GM12878 (cell line): ENCODE measurements at regions of chr13 and their contacts with region 1.

Region 1: GRCh38 chr13:27953676-27954405 is 15.3 kb downstream of the CDX2 start:
- DNase-seq: no peak
- ATAC-seq: peak; percentile 99
- H3K4me3 ChIP-seq: peak overlapping the region; percentile 43; the same call in 1 of the 2 replicates
- H3K27ac ChIP-seq: no peak overlapping the region
- H3K4me1 ChIP-seq: peaks cover 9% of the 10 kb centered on the region
- H3K27me3 ChIP-seq: peaks cover 9 to 10% of the 10 kb centered on the region in 2 experiments
- CTCF ChIP-seq: peak; percentile 81 to 88 (median 85)
- EP300 ChIP-seq: no peak
- POLR2A ChIP-seq: no peak
- RAD21 ChIP-seq: peak; percentile 82

Region 2: GRCh38 chr13:27489456-27489855 is 464.4 kb before region 1 on chr13:
- CTCF ChIA-PET with region 1: no interaction called
- POLR2A ChIA-PET with region 1: no interaction called
- RAD21 ChIA-PET with region 1: no interaction called
- SMC1A ChIA-PET with region 1: no interaction called
- in situ Hi-C with region 1: no loop called
- intact Hi-C with region 1: no loop called
- DNase-seq: no peak
- ATAC-seq: no peak
- H3K4me3 ChIP-seq: no peak overlapping the region
- H3K27ac ChIP-seq: no peak overlapping the region
- H3K4me1 ChIP-seq: no peaks in the 10 kb centered on the region
- H3K27me3 ChIP-seq: no peaks in the 10 kb centered on the region
- CTCF ChIP-seq: no peak
- EP300 ChIP-seq: no peak
- POLR2A ChIP-seq: no peak
- RAD21 ChIP-seq: no peak

Region 3: GRCh38 chr13:27770809-27771208 is 183.0 kb before region 1 on chr13:
- CTCF ChIA-PET with region 1: interaction called, 14 read pairs
- POLR2A ChIA-PET with region 1: interaction called, 4 read pairs
- RAD21 ChIA-PET with region 1: interaction called, 4 read pairs
- SMC1A ChIA-PET with region 1: interaction called, 3 read pairs
- in situ Hi-C with region 1: no loop called
- intact Hi-C with region 1: no loop called
- DNase-seq: no peak
- ATAC-seq: peak; percentile 86
- H3K4me3 ChIP-seq: no peak overlapping the region
- H3K27ac ChIP-seq: no peak overlapping the region
- H3K4me1 ChIP-seq: peaks cover 3% of the 10 kb centered on the region; the same call in 1 of the 2 replicates
- H3K27me3 ChIP-seq: peaks cover 0 to 1% of the 10 kb centered on the region in 2 experiments; a peak in 1 of 4 replicates
- CTCF ChIP-seq: peak; percentile 59 to 67 (median 64)
- EP300 ChIP-seq: no peak
- POLR2A ChIP-seq: no peak
- RAD21 ChIP-seq: peak; percentile 49

Region 4: GRCh38 chr13:27839809-27840467 is 113.9 kb before region 1 on chr13:
- CTCF ChIA-PET with region 1: interaction called, 11 read pairs
- POLR2A ChIA-PET with region 1: no interaction called
- RAD21 ChIA-PET with region 1: no interaction called
- SMC1A ChIA-PET with region 1: interaction called, 9 read pairs
- in situ Hi-C with region 1: no loop called
- intact Hi-C with region 1: no loop called
- DNase-seq: no peak
- ATAC-seq: no peak
- H3K4me3 ChIP-seq: no peak overlapping the region
- H3K27ac ChIP-seq: no peak overlapping the region
- H3K4me1 ChIP-seq: no peaks in the 10 kb centered on the region
- H3K27me3 ChIP-seq: no peaks in the 10 kb centered on the region
- CTCF ChIP-seq: no peak
- EP300 ChIP-seq: no peak
- POLR2A ChIP-seq: no peak
- RAD21 ChIP-seq: no peak

Region 5: DNA sequence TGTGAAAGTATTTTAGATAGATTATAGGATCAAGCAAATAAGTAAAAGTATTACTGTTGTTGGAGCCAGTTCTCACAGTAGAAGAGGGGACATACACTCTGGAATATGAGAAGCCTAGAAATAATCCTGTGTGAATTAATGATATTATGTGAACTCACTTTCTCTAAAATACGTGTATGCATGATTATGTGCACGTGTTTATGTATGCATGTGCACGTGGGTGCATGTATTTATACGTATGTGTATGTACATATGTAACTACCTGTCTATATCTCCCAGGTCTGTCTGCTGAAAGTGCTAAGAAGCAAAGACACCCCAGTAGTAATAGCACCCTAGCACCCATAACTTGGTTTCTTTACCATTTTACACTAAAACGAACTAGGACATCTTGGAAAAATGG is 75.6 kb before region 1 on chr13:
- CTCF ChIA-PET with region 1: interaction called, 11 read pairs
- POLR2A ChIA-PET with region 1: no interaction called
- RAD21 ChIA-PET with region 1: interaction called, 3 read pairs
- SMC1A ChIA-PET with region 1: interaction called, 3 read pairs
- in situ Hi-C with region 1: no loop called
- intact Hi-C with region 1: no loop called
- DNase-seq: no peak
- ATAC-seq: no peak
- H3K4me3 ChIP-seq: no peak overlapping the region
- H3K27ac ChIP-seq: no peak overlapping the region
- H3K4me1 ChIP-seq: no peaks in the 10 kb centered on the region
- H3K27me3 ChIP-seq: peaks cover 0 to 3% of the 10 kb centered on the region in 2 experiments; a peak in 2 of 4 replicates
- CTCF ChIP-seq: no peak
- EP300 ChIP-seq: no peak
- POLR2A ChIP-seq: no peak
- RAD21 ChIP-seq: no peak

Region 6: GRCh38 chr13:27977476-27978300 is 23.8 kb after region 1 on chr13:
- CTCF ChIA-PET with region 1: interaction called, 51 read pairs
- POLR2A ChIA-PET with region 1: no interaction called
- RAD21 ChIA-PET with region 1: interaction called, 3 read pairs
- SMC1A ChIA-PET with region 1: no interaction called
- in situ Hi-C with region 1: no loop called
- intact Hi-C with region 1: no loop called
- DNase-seq: no peak
- ATAC-seq: no peak
- H3K4me3 ChIP-seq: no peak overlapping the region
- H3K27ac ChIP-seq: no peak overlapping the region
- H3K4me1 ChIP-seq: no peaks in the 10 kb centered on the region
- H3K27me3 ChIP-seq: peaks cover 27 to 45% of the 10 kb centered on the region in 2 experiments
- CTCF ChIP-seq: no peak
- EP300 ChIP-seq: no peak
- POLR2A ChIP-seq: no peak
- RAD21 ChIP-seq: no peak

Region 7: GRCh38 chr13:28100150-28101121 is 146.6 kb after region 1 on chr13 and contains the start of gene FLT3:
- CTCF ChIA-PET with region 1: no interaction called
- POLR2A ChIA-PET with region 1: no interaction called
- RAD21 ChIA-PET with region 1: no interaction called
- SMC1A ChIA-PET with region 1: no interaction called
- in situ Hi-C with region 1: no loop called
- intact Hi-C with region 1: no loop called
- DNase-seq: no peak
- ATAC-seq: peak; percentile 83
- H3K4me3 ChIP-seq: peak within 1 kb of the TSS; percentile 68; the same call in 1 of the 2 replicates
- H3K27ac ChIP-seq: no peak within 1 kb of the TSS
- H3K4me1 ChIP-seq: no peaks in the 10 kb centered on the region
- H3K27me3 ChIP-seq: peaks cover 6 to 18% of the 10 kb centered on the region in 2 experiments
- CTCF ChIP-seq: no peak
- EP300 ChIP-seq: no peak
- POLR2A ChIP-seq: no peak
- RAD21 ChIP-seq: no peak
- polyA plus RNA-seq, gene FLT3: 0.06 to 0.13 TPM